ENCODE measurements at regions of chr17 and their contacts with region 1.

Region 1: DNA sequence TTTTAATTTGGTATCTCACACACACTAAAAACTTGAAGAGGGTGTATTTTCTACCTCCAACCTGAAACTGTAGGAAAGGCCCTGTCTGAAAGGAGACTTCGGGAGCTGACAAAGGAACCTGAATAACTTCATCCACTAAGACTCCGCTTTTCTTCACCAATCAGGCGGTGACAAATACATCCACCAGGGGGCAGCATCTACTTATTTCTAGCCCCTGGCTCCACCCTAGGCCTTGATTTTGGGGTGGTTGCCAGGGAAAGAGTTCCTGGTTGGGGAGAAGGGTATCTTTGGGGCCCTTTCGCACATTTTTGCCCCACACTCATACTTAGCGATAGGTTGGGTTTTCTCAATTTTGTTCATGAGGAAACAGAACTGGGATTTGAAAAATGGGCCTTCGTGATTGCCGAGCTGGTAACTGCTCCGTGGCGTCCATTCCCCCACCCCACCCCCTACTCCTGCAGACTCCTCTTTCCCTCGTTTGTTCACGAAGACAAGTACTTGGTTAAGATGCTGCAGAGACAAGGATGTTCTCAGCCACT is 4.8 kb upstream of the ARL4D start:
- DNase-seq: peak; percentile 84
- ATAC-seq: peak; percentile 75 to 82
- H3K4me3 ChIP-seq: peak overlapping the region; percentile 8
- H3K27ac ChIP-seq: peak overlapping the region; percentile 58
- H3K4me1 ChIP-seq: peaks cover 37% of the 10 kb centered on the region
- H3K27me3 ChIP-seq: no peaks in the 10 kb centered on the region
- CTCF ChIP-seq: peak; percentile 94

Region 2: GRCh38 chr17:43483674-43484372 is 89.8 kb after region 1 on chr17 and contains the start of gene DHX8:
- intact Hi-C with region 1: loop called (anchors 2 kb)
- DNase-seq: peak; percentile 99
- ATAC-seq: peak; percentile 99 to 100
- H3K4me3 ChIP-seq: peak within 1 kb of the TSS; percentile 72
- H3K27ac ChIP-seq: peak within 1 kb of the TSS; percentile 86
- H3K4me1 ChIP-seq: peaks cover 26% of the 10 kb centered on the region
- H3K27me3 ChIP-seq: no peaks in the 10 kb centered on the region
- CTCF ChIP-seq: peak; percentile 100
- total RNA-seq, gene DHX8: 56.7 TPM